Mammary epithelial cell (primary cell): ENCODE measurements at regions of chr10 and their contacts with region 1.

Region 1: GRCh38 chr10:120005207-120006201 is 113.0 kb downstream of the SEC23IP start:
- DNase-seq: no peak
- H3K4me3 ChIP-seq: no peak overlapping the region
- H3K27ac ChIP-seq: no peak overlapping the region
- H3K4me1 ChIP-seq: no peaks in the 10 kb centered on the region
- H3K27me3 ChIP-seq: peaks cover 4% of the 10 kb centered on the region
- CTCF ChIP-seq: no peak

Region 2: GRCh38 chr10:120262857-120263547 is 257.5 kb after region 1 on chr10:
- CTCF ChIA-PET with region 1: no interaction called
- dilution Hi-C with region 1: no loop called
- in situ Hi-C with region 1: no loop called
- intact Hi-C with region 1: no loop called
- DNase-seq: peak; percentile 58
- H3K4me3 ChIP-seq: no peak overlapping the region
- H3K27ac ChIP-seq: no peak overlapping the region
- H3K4me1 ChIP-seq: no peaks in the 10 kb centered on the region
- H3K27me3 ChIP-seq: peaks cover 4% of the 10 kb centered on the region
- CTCF ChIP-seq: no peak

Region 3: GRCh38 chr10:121627821-121628581 is 1622.5 kb after region 1 on chr10:
- CTCF ChIA-PET with region 1: no interaction called
- dilution Hi-C with region 1: no loop called
- in situ Hi-C with region 1: no loop called
- intact Hi-C with region 1: loop called (anchors 10 kb)
- DNase-seq: peak; percentile 85
- H3K4me3 ChIP-seq: no peak overlapping the region
- H3K27ac ChIP-seq: no peak overlapping the region
- H3K4me1 ChIP-seq: peaks cover 21% of the 10 kb centered on the region
- H3K27me3 ChIP-seq: no peaks in the 10 kb centered on the region
- CTCF ChIP-seq: no peak